ENCODE measurements at regions of chr7 and their contacts with region 1.

Region 1: DNA sequence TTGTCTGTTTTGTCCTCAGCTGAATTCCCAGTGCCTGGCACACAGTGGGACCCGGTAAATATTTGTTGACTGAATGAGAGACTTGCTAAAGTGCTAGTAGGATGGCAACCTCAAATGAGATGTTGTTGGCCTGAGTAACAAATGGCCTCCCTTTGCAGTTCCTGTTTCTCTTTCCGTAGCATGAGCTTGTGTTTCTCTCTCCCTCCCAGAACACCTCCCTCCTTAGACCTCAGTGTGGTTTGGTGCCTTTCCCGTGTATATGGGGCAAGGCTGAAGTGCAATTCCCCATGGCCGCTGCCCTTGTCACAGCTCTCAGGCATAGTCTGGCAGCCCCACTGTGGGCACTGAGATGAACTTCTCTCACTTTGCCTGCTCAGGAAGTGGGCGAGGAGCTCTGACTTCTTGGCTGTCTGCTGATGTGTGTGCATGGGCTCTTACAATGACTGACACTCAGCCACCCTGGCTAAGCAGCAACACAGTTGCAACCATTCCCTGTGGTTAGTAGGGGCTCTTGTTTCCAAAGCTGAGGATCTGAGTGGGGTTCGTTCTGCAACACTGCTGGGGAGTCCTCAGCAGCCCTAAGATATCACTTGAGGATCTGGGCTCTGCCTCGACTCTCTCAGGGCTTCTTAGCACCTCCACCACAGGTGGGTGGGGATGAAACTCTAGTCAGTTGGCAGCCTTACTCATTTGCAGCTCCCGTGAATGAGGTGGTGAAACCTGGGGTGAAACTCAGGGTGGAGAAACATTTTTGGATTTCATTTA is 136.1 kb downstream of the ICA1 start:
- DNase-seq: peak; percentile 86
- H3K4me3 Mint-ChIP-seq: peak overlapping the region; percentile 65
- H3K27ac Mint-ChIP-seq: peak overlapping the region; percentile 100
- H3K4me1 Mint-ChIP-seq: peaks cover 65% of the 10 kb centered on the region
- H3K27me3 Mint-ChIP-seq: no peaks in the 10 kb centered on the region

Region 2: DNA sequence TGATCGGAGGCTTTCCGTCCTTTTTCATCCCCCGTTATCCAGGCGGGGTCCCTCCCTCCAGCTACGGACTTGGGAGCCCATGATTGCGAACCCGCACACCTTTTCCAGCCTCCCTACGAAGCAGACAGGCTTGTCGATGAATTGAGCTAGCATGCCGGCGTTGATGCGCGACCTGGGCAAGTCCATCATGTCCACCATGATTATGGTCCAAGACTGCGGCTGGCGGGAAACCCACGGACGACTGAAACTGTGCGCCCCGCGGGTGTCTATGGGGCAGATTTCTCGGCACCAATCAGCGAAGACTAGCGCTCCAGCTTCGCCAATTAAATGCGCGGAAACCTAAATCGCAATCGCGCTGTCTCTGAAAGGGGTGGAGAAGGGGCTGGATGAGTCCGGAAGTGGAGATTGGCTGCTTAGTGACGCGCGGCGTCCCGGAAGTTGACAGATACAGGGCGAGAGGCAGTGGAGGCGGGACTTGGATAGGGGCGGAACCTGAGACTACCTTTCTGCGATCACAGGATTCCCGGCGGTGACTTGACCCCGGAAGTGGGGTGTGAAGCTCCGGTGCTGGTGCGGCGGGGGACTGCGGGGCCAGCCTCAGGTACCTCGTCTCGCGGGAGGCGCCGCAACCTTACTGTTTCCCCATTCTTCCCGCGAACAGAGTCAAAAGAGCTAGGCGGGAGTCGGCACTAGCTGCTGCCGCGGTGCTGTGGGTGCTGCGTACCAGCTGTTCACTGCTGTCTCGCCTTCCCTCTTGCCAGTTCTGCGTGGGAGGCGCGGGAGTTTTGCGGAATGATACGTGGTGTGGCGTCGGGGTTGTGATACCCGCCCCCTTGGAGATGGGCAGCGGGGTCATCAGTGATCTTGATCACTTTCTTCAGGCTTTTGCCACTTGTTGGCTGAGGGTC is 485.4 kb before region 1 on chr7 and contains the start of gene UMAD1:
- CTCF ChIA-PET with region 1: no interaction called
- POLR2A ChIA-PET with region 1: interaction called, 22 read pairs
- DNase-seq: peak; percentile 99
- H3K4me3 Mint-ChIP-seq: peak within 1 kb of the TSS; percentile 90
- H3K27ac Mint-ChIP-seq: peak within 1 kb of the TSS; percentile 90
- H3K4me1 Mint-ChIP-seq: peaks cover 36% of the 10 kb centered on the region
- H3K27me3 Mint-ChIP-seq: no peaks in the 10 kb centered on the region
- total RNA-seq, gene UMAD1: 16.1 to 16.7 TPM

Region 3: GRCh38 chr7:8035647-8036518 is 90.0 kb before region 1 on chr7:
- CTCF ChIA-PET with region 1: no interaction called
- POLR2A ChIA-PET with region 1: no interaction called
- DNase-seq: no peak
- H3K4me3 Mint-ChIP-seq: no peak overlapping the region
- H3K27ac Mint-ChIP-seq: no peak overlapping the region
- H3K4me1 Mint-ChIP-seq: peaks cover 19% of the 10 kb centered on the region
- H3K27me3 Mint-ChIP-seq: no peaks in the 10 kb centered on the region

Region 4: DNA sequence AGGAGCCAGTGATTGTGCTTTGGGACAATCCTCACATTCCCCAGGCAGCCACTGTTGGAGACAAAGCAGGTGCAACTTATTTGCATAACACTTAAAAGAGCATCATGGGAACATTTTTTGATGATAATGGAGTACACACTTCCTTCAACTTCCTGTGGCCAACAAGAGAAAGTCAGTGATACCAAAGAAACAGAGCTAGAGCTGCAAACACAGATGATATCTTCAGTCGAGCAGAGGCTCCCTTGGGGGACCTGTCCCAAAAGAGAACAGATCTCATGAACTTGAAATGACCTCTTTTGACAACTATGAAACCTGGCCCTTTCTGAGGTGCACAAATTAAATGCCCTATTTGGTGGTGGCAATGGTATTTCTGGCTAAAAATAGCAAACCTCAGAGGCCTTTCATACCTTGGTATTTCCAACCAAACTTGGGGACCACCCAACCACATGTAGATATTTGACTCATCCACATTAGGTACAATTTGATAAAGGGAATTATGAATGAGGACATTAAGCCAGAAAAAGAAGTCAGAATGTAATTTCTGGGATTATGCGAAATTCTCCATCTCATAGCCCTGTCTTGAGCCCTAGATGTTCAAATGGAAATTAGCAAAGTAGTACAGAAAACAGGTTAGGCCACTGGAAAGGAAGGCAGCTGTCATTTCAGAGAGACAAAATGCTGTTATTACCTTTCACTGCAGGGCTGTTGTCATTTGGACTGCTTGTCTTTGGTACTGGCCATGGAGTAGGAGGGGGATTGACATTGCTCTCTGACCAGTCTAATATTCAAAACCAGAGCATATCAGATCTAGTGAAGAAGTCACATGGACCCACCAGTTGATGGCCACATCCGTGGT is 10.1 kb before region 1 on chr7:
- CTCF ChIA-PET with region 1: interaction called, 4 read pairs
- POLR2A ChIA-PET with region 1: interaction called, 12 read pairs
- DNase-seq: no peak
- H3K4me3 Mint-ChIP-seq: no peak overlapping the region
- H3K27ac Mint-ChIP-seq: peak overlapping the region; percentile 26
- H3K4me1 Mint-ChIP-seq: peaks cover 41% of the 10 kb centered on the region
- H3K27me3 Mint-ChIP-seq: no peaks in the 10 kb centered on the region

Region 5: DNA sequence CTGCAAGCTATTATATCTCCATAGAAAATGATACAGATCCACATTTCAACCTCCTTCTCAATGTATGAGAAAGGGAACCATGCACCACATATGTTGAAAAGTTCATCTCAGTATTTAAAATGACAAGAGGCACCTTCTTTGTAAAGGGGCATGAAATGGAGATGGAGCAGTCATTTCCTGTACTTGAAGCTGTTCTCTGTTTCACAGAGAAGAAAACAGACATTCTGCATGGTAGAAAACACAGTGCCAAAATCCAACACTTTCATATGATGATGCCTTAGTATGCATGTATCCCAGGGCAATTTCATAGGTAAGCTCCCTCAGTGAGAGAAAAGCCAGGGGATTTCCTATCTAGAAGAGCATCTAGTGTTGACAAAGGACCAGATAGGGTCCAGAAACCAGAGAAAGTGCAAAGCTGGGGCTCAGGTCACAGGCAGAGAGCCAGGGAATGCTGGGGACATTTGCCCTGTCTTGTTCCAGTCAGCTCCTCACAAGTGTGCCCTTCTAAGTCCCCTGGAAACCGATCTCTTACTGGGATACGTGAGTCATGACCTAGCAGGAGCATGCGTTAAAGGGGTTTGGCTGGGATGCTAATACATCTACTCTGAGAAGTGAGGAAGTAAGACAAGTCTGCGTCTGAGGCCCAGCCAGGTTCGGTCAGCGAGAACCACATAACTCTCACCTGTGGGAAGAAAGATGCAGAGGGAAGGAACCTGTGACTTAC is 17.5 kb after region 1 on chr7:
- CTCF ChIA-PET with region 1: no interaction called
- POLR2A ChIA-PET with region 1: interaction called, 10 read pairs
- DNase-seq: no peak
- H3K4me3 Mint-ChIP-seq: no peak overlapping the region
- H3K27ac Mint-ChIP-seq: no peak overlapping the region
- H3K4me1 Mint-ChIP-seq: peaks cover 8% of the 10 kb centered on the region
- H3K27me3 Mint-ChIP-seq: peaks cover 4% of the 10 kb centered on the region

Region 6: DNA sequence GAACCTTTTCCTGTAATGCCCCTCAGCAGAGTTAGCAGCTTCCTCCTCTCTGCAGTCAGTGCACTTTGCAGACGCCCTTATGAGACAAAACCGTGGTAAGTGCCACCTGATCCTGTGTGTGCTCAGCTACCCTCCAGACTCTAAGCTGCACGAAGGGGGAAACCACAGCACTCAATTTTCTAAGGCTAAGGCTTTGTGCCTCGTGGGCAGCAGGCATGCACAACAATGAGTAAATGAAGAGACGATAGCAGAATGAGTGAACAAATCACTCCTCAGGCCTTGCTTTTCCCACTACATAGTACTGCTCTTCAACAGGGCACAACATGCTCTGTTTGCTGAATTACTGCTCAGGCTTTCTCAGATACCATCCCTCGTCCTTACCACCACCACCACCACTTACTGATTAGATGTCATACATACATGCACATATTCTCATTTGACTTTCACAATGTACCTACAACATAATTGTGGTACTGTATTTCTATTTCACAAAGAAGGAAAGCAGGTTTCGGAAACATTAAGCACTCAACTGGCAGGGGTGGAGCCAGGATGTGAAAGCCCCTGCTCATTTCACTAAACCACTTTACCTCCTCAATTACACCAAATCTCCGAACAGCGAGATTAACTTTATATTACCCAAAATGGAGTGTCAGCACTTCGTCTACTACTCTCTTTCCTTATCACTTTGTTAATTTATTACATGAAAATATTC is 50.7 kb after region 1 on chr7:
- CTCF ChIA-PET with region 1: interaction called, 10 read pairs
- POLR2A ChIA-PET with region 1: interaction called, 11 read pairs
- DNase-seq: peak; percentile 78
- H3K4me3 Mint-ChIP-seq: peak overlapping the region; percentile 58
- H3K27ac Mint-ChIP-seq: peak overlapping the region; percentile 99
- H3K4me1 Mint-ChIP-seq: peaks cover 51% of the 10 kb centered on the region
- H3K27me3 Mint-ChIP-seq: no peaks in the 10 kb centered on the region

Region 7: DNA sequence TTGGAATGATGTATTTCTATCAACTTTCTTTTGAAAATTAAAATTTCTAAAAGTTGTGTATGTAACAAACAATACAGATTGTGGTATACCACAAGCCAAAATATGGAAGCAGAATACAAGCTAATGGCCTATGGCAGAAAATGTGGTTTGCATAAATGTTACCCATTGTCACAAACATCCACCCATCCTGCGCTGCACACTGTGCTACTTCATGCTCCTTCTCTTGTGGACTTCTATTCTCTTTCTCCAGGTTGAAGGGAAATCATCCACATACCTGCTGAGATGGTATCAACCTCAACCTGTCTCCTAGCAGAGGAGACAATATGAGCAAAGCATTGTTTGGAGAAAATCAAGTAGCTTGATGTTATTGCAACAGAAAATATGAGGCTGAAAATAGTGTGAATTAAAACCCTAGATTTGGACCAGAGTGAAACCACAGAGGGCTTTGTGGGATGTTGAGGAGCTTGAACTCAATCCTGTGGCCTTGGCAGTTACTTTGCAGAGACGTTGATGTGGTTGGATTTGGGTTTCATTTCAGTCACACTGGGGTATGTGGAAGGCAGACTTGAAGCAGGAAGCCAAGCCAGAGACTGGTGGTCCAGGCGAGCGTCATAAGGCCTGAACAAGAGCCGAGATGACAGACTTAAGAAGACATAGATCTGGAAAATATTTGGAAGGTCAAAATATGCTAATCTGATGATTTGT is 72.3 kb after region 1 on chr7:
- CTCF ChIA-PET with region 1: interaction called, 6 read pairs
- POLR2A ChIA-PET with region 1: interaction called, 20 read pairs
- DNase-seq: peak; percentile 67
- H3K4me3 Mint-ChIP-seq: peak overlapping the region; percentile 2
- H3K27ac Mint-ChIP-seq: peak overlapping the region; percentile 68
- H3K4me1 Mint-ChIP-seq: peaks cover 56% of the 10 kb centered on the region
- H3K27me3 Mint-ChIP-seq: peaks cover 13% of the 10 kb centered on the region

Region 8: DNA sequence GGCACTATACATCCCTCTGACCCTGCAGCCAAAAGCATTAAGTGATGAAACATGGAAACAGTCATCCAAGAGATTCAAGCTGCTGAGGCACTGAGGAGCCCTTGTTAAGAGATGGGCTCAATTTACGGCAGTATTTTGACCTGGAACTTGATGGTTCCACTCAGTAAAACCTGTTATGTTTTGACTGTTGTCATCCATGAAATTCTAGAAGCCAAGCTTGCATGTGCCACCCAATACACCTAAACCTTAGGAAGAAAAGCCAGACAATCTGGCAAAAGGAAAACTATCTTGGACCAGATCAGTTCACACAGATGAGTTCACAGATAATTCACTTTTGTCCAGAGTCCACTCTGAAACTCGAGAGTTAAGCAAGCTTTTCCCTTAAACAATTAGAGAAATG is 83.0 kb after region 1 on chr7:
- CTCF ChIA-PET with region 1: no interaction called
- POLR2A ChIA-PET with region 1: no interaction called
- DNase-seq: no peak
- H3K4me3 Mint-ChIP-seq: no peak overlapping the region
- H3K27ac Mint-ChIP-seq: no peak overlapping the region
- H3K4me1 Mint-ChIP-seq: no peaks in the 10 kb centered on the region
- H3K27me3 Mint-ChIP-seq: peaks cover 8% of the 10 kb centered on the region